Calu3 (cell line): ENCODE measurements at regions of chr1 and their contacts with region 1.

Region 1: DNA sequence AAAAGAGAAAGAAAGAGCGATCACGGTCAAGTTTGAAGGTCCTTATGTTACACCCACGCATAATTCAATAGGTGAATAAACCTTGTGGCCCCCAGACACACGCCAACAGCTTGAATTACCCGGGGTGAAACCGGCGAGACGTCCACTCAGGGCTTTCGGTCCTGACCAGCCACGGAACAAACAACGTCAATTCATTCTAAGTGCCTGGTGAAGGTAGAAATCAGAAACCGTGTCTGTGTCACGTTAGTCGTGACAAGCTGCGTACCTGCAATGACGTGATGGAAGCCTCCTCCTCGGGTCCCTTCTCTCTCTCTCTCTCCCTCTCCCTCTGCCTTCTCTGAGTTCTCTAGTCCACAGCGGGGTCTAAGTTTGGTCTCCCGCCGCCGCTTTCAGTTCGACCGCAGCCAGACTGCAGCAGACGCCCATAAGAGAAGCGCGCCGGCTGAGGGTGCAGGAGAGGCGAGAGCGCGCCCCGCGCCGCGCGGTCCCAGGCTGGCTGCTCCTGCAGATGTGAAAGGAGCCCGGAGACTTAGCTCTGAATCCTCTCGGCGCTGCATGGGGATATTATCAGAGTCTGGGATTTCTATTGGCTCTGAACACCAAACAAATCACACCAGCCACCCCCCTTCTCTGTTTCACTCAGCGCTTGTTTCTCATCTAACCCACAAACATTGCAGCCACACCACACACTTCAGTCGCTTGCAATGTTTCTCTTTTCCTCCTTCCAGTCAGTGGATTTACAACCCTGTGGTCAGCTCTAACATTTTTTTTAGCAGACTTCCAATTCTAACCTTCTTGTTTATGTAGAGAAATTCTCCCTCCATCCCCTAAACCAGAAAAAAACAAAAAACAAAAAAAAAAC is at the start of gene GREM2:
- DNase-seq: peak; percentile 54
- H3K4me3 Mint-ChIP-seq: peak within 1 kb of the TSS; percentile 86
- H3K27ac Mint-ChIP-seq: peak within 1 kb of the TSS; percentile 6
- H3K4me1 Mint-ChIP-seq: peaks cover 26% of the 10 kb centered on the region
- H3K27me3 Mint-ChIP-seq: peaks cover 55% of the 10 kb centered on the region
- CTCF ChIP-seq: no peak
- total RNA-seq, gene GREM2: not detected in 2 replicates

Region 2: DNA sequence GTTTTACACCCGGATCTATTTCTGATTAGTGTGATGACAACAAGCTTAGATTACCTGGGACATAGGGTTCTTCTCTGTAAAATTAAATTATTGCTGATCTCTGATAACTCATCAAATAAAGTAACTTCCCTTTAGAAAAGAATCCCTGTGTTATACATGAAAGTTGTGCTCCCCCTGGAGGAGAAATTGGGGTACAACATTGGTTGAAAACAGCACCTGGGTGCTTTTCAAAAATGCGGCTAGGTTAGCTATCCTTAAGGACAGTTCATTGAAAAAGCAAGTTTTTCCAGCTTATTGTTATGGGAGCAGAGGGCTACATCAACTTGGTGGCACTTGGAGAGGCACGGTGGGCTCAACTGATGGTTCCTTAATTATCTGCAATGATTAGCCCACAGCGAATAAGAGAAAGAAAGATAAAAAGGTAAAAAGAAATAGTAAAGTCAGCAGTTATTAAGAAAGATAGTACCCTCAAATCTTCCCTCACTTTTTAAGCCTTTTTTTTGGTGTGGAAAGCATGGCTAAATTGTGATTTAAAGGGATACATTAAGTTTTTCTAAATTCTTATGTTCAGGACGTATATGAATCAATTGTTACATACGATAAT is 422.4 kb before region 1 on chr1:
- CTCF ChIA-PET with region 1: interaction called, 3 read pairs
- intact Hi-C with region 1: loop called (anchors 1 kb)
- DNase-seq: peak; percentile 67
- H3K4me3 Mint-ChIP-seq: peak overlapping the region; percentile 19
- H3K27ac Mint-ChIP-seq: peak overlapping the region; percentile 16
- H3K4me1 Mint-ChIP-seq: peaks cover 9% of the 10 kb centered on the region
- H3K27me3 Mint-ChIP-seq: peaks cover 25% of the 10 kb centered on the region
- CTCF ChIP-seq: peak; percentile 56

Region 3: DNA sequence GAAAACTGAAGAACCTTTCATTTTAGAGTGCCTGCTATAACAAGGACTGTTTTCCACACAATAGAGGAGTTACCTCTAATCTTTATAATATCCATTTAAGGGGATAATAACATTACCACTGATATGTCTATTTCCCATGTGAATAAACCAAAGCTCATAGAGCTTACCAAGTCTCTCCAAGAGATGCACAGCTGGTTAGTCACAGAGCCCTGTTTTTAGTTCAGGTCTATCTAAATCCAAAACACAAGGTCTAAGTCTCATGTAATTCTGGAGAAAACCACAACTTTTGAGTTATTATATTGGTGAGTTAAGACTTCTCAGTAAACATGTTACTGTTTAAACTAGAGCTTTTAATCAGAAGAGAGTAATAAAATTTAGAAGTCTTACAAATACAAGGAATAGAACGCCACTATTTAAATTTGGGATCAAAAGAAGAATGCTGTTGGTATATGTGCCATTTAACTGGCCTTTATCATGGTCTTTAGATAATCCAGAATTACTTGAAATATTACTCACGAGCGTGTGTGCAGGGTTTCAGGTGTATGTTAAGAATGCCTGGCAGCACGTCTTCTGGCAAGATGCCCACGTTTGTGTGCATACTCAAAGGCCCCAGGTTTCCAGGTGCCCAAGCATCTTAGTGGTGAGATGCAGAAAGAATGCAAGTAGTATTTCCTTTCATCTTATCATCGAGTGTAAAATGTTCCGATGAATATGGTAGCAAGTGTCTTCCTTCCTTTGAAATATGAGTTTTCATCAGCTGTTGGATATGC is 329.6 kb before region 1 on chr1:
- CTCF ChIA-PET with region 1: no interaction called
- intact Hi-C with region 1: loop called (anchors 5 kb)
- DNase-seq: peak; percentile 50
- H3K4me3 Mint-ChIP-seq: no peak overlapping the region
- H3K27ac Mint-ChIP-seq: no peak overlapping the region
- H3K4me1 Mint-ChIP-seq: peaks cover 8% of the 10 kb centered on the region
- H3K27me3 Mint-ChIP-seq: peaks cover 18% of the 10 kb centered on the region
- CTCF ChIP-seq: no peak

Region 4: GRCh38 chr1:240455228-240455821 is 156.5 kb before region 1 on chr1:
- CTCF ChIA-PET with region 1: interaction called, 8 read pairs
- intact Hi-C with region 1: loop called (anchors 1 kb)
- DNase-seq: peak; percentile 27
- H3K4me3 Mint-ChIP-seq: no peak overlapping the region
- H3K27ac Mint-ChIP-seq: no peak overlapping the region
- H3K4me1 Mint-ChIP-seq: no peaks in the 10 kb centered on the region
- H3K27me3 Mint-ChIP-seq: no peaks in the 10 kb centered on the region
- CTCF ChIP-seq: peak; percentile 37

Region 5: DNA sequence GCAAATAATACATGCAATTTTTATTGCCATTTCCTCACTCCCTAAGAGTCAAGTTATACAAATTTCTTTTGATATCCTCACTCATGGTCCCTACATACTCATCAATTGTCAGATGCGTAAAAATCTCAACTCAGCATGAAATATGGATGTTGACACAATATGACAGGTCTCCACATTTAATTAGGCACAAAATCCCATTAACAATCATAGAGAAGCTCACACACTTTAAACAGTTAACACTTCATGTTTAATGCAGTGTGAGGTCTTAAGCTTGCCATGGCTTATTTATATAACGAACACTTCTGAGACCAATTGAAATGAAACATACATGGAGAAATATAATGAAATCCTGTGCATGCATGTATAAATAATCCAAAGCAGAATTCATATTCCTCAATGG is 58.5 kb before region 1 on chr1:
- CTCF ChIA-PET with region 1: no interaction called
- intact Hi-C with region 1: no loop called
- DNase-seq: no peak
- H3K4me3 Mint-ChIP-seq: no peak overlapping the region
- H3K27ac Mint-ChIP-seq: no peak overlapping the region
- H3K4me1 Mint-ChIP-seq: no peaks in the 10 kb centered on the region
- H3K27me3 Mint-ChIP-seq: no peaks in the 10 kb centered on the region
- CTCF ChIP-seq: no peak

Region 6: GRCh38 chr1:240652549-240652948 is 40.7 kb after region 1 on chr1:
- CTCF ChIA-PET with region 1: no interaction called
- intact Hi-C with region 1: loop called (anchors 1 kb)
- DNase-seq: no peak
- H3K4me3 Mint-ChIP-seq: no peak overlapping the region
- H3K27ac Mint-ChIP-seq: no peak overlapping the region
- H3K4me1 Mint-ChIP-seq: no peaks in the 10 kb centered on the region
- H3K27me3 Mint-ChIP-seq: peaks cover 15% of the 10 kb centered on the region
- CTCF ChIP-seq: no peak

Region 7: DNA sequence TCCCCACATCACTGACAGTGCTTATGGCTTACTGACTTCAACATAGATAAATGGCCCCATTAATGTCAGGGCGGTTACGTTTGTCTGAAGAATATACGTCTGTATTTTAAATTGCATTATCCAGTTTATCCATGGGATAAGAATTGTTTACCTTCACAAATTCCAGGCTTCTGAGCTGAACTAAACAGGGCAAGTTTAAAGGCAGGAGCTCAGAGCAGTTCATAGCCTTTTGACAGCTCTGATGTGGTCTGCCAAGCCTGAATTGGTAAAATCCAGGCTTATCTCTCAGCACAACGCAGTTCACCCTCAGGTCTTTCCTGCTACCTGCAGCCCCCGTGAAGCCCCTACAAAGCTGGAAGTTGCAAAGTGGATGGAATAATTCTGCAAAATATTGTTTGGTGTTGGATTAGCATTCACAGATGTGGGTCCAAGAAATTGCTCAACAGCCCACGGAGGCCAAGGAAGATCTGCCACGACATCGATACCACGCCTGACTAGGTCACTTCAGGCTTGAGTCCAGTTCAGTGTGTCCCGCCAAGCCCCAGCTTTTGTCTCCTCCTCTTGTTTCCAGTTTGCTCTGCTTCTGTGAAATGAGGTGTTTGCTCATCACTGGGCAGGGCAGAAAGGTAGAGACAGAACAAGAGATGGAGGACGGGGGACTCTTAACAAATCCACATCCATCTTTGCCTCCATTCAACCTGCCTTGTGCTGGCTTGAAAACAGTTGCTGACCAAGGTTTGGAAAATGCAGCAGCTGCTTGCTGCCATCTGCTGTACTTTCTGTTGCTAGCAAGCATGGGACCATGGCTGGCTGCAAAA is 79.9 kb after region 1 on chr1:
- CTCF ChIA-PET with region 1: no interaction called
- intact Hi-C with region 1: loop called (anchors 5 kb)
- DNase-seq: peak; percentile 38
- H3K4me3 Mint-ChIP-seq: no peak overlapping the region
- H3K27ac Mint-ChIP-seq: no peak overlapping the region
- H3K4me1 Mint-ChIP-seq: no peaks in the 10 kb centered on the region
- H3K27me3 Mint-ChIP-seq: no peaks in the 10 kb centered on the region
- CTCF ChIP-seq: peak; percentile 41

Region 8: GRCh38 chr1:240706150-240706935 is 94.5 kb after region 1 on chr1:
- CTCF ChIA-PET with region 1: no interaction called
- intact Hi-C with region 1: no loop called
- DNase-seq: no peak
- H3K4me3 Mint-ChIP-seq: no peak overlapping the region
- H3K27ac Mint-ChIP-seq: no peak overlapping the region
- H3K4me1 Mint-ChIP-seq: no peaks in the 10 kb centered on the region
- H3K27me3 Mint-ChIP-seq: peaks cover 56% of the 10 kb centered on the region
- CTCF ChIP-seq: no peak